Natural killer cell (primary cell): ENCODE measurements at regions of chr10 and their contacts with region 1.

Region 1: DNA sequence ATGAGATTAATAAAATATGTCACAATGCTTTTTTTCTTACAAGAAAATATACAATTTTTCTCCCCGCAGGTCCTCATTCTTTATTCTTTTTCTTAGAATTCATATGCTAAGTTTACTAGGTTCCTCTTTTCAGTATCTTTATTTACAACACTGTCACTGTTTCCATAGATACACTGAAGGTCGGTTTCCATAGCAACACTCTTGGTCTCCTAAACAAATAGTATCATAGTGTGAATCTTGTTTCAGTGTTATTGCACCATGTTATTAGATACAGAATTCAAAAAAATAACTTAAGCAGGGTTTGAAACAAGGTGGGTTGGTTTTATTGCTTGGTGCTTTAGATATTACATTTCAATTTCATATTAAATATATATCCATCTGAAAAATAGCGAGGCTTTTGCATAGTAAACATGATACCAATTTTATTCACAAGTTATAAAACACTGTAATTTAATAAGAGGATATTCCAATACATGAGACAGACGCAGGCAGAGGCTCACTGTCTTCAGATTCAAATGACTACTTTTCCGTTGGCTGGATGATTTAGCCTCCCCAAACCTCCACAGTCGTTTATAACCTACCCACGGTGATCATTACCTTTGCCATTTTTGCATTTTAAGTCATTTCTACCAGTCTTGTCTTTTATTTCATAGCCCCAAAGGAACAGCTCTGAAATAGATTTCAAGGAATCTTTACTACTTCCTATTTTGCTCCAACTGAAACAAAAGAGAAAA is 88.9 kb upstream of the KLF6 start:
- DNase-seq: peak in 1 of 2 donors; percentile 89
- ATAC-seq: peak; percentile 76 to 80 (median 78)
- H3K4me3 ChIP-seq: no peak overlapping the region
- H3K4me3 Mint-ChIP-seq: peak overlapping the region; percentile 33
- H3K27ac ChIP-seq: peak overlapping the region; percentile 89
- H3K27ac Mint-ChIP-seq: peak overlapping the region; percentile 83 to 90
- H3K4me1 ChIP-seq: peaks cover 29% of the 10 kb centered on the region
- H3K4me1 Mint-ChIP-seq: peaks cover 24 to 42% of the 10 kb centered on the region in 2 donors
- H3K27me3 ChIP-seq: no peaks in the 10 kb centered on the region
- H3K27me3 Mint-ChIP-seq: no peaks in the 10 kb centered on the region
- CTCF ChIP-seq: no peak

Region 2: DNA sequence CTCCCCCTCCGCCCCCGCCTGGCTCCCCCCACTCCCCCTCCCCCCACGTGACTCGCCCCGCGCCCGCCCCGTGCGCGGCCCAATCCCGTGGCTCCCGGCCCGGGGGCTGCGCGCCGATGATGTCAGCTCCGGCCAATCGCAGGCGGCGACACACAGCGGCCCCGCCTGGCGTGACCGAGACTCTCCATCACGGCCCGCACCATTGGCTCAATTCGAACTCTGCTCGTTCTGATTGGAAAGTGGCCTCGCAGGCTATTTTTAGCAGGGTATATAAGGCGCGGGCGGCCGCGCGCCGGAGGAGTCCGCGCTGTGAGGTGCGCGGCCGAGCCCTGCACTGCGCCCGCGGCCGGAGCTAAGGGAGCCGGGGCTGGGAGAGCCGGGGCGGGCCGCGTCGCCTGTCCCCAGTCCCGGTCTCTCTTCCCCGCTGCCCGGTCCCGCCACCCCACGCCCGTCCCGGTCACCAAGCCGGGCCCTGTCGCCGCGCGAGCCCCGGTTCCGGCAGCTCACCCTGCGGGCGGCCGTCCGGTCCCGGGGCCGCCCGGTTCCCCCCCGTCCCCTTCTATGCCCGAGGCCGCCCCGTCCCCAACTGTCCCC is 88.5 kb before region 1 on chr10:
- intact Hi-C with region 1: loop called (anchors 2 kb)
- DNase-seq: peak; percentile 99 to 100
- ATAC-seq: peak; percentile 64 to 88 (median 76)
- H3K4me3 ChIP-seq: peak overlapping the region; percentile 86
- H3K4me3 Mint-ChIP-seq: peak overlapping the region; percentile 99
- H3K27ac ChIP-seq: peak overlapping the region; percentile 93
- H3K27ac Mint-ChIP-seq: peak overlapping the region; percentile 100
- H3K4me1 ChIP-seq: peaks cover 22% of the 10 kb centered on the region
- H3K4me1 Mint-ChIP-seq: peaks cover 49 to 56% of the 10 kb centered on the region in 2 donors
- H3K27me3 ChIP-seq: no peaks in the 10 kb centered on the region
- H3K27me3 Mint-ChIP-seq: peaks cover 0 to 8% of the 10 kb centered on the region in 2 donors
- CTCF ChIP-seq: no peak

Region 3: GRCh38 chr10:3853547-3854303 is 20.2 kb before region 1 on chr10:
- intact Hi-C with region 1: no loop called
- DNase-seq: no peak
- ATAC-seq: no peak
- H3K4me3 ChIP-seq: no peak overlapping the region
- H3K4me3 Mint-ChIP-seq: no peak overlapping the region
- H3K27ac ChIP-seq: no peak overlapping the region
- H3K27ac Mint-ChIP-seq: peak overlapping the region in 1 of 2 donors; percentile 86
- H3K4me1 ChIP-seq: peaks cover 14% of the 10 kb centered on the region
- H3K4me1 Mint-ChIP-seq: peaks cover 15 to 26% of the 10 kb centered on the region in 2 donors
- H3K27me3 ChIP-seq: no peaks in the 10 kb centered on the region
- H3K27me3 Mint-ChIP-seq: no peaks in the 10 kb centered on the region
- CTCF ChIP-seq: no peak

Region 4: GRCh38 chr10:3987143-3987974 is 113.5 kb after region 1 on chr10:
- intact Hi-C with region 1: no loop called
- DNase-seq: no peak
- ATAC-seq: no peak
- H3K4me3 ChIP-seq: no peak overlapping the region
- H3K4me3 Mint-ChIP-seq: no peak overlapping the region
- H3K27ac ChIP-seq: no peak overlapping the region
- H3K27ac Mint-ChIP-seq: no peak overlapping the region
- H3K4me1 ChIP-seq: no peaks in the 10 kb centered on the region
- H3K4me1 Mint-ChIP-seq: peaks cover 3 to 12% of the 10 kb centered on the region in 2 donors
- H3K27me3 ChIP-seq: no peaks in the 10 kb centered on the region
- H3K27me3 Mint-ChIP-seq: no peaks in the 10 kb centered on the region
- CTCF ChIP-seq: no peak